ENCODE measurements at regions of chr12 and their contacts with region 1.

Region 1: GRCh38 chr12:92136965-92137721 is 8.5 kb downstream of the BTG1 start:
- DNase-seq: no peak
- ATAC-seq: peak; percentile 7
- H3K4me3 ChIP-seq: peak overlapping the region; percentile 89
- H3K27ac ChIP-seq: peak overlapping the region; percentile 85
- H3K4me1 ChIP-seq: peaks cover 13% of the 10 kb centered on the region; the same call in 1 of the 2 replicates
- H3K27me3 ChIP-seq: no peaks in the 10 kb centered on the region
- CTCF ChIP-seq: no peak
- EP300 ChIP-seq: no peak
- POLR2A ChIP-seq: no peak
- RAD21 ChIP-seq: no peak

Region 2: DNA sequence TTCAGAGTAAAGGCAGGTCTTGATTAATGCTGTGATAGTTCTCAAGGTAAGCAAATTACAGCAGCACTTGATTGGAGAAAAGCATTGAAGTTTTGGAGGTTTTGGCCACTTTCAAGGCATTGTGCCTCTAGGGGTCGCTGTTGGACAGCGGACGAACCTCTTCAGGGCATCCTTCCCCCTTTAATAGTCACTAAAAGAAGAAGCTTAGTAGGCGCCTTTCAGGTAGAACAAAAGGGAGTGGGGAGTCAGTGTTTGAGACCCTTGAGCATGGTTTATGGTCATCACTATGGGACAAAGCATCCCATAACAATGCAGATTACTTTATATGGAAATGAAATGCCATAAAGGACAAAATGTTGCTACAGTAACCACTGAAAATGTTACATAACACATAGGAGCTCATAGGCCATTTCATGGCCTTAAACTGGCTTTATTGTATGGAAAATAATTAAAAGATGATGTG is 755.0 kb before region 1 on chr12:
- CTCF ChIA-PET with region 1: interaction called, 10 read pairs
- POLR2A ChIA-PET with region 1: no interaction called
- RAD21 ChIA-PET with region 1: interaction called, 7 read pairs
- SMC1A ChIA-PET with region 1: interaction called, 4 read pairs
- in situ Hi-C with region 1: no loop called
- intact Hi-C with region 1: loop called (anchors 5 kb)
- DNase-seq: peak; percentile 54
- ATAC-seq: peak; percentile 95
- H3K4me3 ChIP-seq: peak overlapping the region; percentile 68
- H3K27ac ChIP-seq: peak overlapping the region; percentile 37; the same call in 1 of the 2 replicates
- H3K4me1 ChIP-seq: peaks cover 3% of the 10 kb centered on the region; the same call in 1 of the 2 replicates
- H3K27me3 ChIP-seq: no peaks in the 10 kb centered on the region
- CTCF ChIP-seq: peak; percentile 80 to 89 (median 87)
- EP300 ChIP-seq: no peak
- POLR2A ChIP-seq: no peak
- RAD21 ChIP-seq: peak; percentile 92

Region 3: DNA sequence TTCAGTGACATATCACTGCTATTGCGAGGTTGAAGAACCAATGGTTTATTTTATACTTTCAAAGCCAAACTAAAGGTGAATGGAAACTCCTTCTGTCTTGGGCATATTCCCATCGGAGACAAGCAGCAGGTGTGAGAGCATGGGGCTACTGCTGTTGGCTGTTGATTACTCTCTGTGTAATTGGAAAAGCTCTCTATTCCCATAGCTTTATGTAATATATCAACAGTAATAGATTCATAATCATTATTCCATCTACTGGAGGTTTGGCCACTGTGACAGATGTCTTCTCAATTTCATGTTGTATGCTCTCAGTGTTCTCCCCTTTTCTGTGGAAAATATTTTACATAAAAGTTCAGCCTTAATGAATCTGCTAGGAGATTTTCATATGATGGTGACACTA is 343.5 kb before region 1 on chr12:
- CTCF ChIA-PET with region 1: no interaction called
- POLR2A ChIA-PET with region 1: no interaction called
- RAD21 ChIA-PET with region 1: no interaction called
- SMC1A ChIA-PET with region 1: no interaction called
- in situ Hi-C with region 1: no loop called
- intact Hi-C with region 1: no loop called
- DNase-seq: no peak
- ATAC-seq: no peak
- H3K4me3 ChIP-seq: no peak overlapping the region
- H3K27ac ChIP-seq: no peak overlapping the region
- H3K4me1 ChIP-seq: no peaks in the 10 kb centered on the region
- H3K27me3 ChIP-seq: no peaks in the 10 kb centered on the region
- CTCF ChIP-seq: no peak
- EP300 ChIP-seq: no peak
- POLR2A ChIP-seq: no peak
- RAD21 ChIP-seq: no peak

Region 4: DNA sequence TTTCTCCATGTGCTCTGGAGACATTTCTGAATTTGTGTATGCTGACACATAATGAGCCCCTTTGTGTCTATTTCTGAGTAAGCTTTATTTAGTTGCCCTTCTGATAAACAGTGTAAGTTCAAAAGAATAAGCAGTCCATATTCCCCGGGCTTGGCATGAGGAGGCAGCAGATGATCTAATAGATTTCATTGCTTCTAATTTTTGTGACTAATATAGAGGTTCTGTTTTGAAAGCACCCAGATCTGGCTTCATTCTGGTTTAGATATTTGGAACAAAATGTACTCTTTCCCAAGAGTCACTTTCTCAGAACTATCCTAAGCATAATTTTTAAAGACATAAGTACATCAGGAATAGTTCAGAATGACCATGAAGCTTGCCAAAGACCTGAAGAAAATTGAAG is 282.4 kb before region 1 on chr12:
- CTCF ChIA-PET with region 1: no interaction called
- POLR2A ChIA-PET with region 1: no interaction called
- RAD21 ChIA-PET with region 1: no interaction called
- SMC1A ChIA-PET with region 1: no interaction called
- in situ Hi-C with region 1: no loop called
- intact Hi-C with region 1: no loop called
- DNase-seq: no peak
- ATAC-seq: peak; percentile 57
- H3K4me3 ChIP-seq: no peak overlapping the region
- H3K27ac ChIP-seq: no peak overlapping the region
- H3K4me1 ChIP-seq: no peaks in the 10 kb centered on the region
- H3K27me3 ChIP-seq: no peaks in the 10 kb centered on the region
- CTCF ChIP-seq: no peak; a peak in 1 of 6 replicates
- EP300 ChIP-seq: no peak
- POLR2A ChIP-seq: no peak
- RAD21 ChIP-seq: no peak; the same call in 1 of the 2 replicates

Region 5: DNA sequence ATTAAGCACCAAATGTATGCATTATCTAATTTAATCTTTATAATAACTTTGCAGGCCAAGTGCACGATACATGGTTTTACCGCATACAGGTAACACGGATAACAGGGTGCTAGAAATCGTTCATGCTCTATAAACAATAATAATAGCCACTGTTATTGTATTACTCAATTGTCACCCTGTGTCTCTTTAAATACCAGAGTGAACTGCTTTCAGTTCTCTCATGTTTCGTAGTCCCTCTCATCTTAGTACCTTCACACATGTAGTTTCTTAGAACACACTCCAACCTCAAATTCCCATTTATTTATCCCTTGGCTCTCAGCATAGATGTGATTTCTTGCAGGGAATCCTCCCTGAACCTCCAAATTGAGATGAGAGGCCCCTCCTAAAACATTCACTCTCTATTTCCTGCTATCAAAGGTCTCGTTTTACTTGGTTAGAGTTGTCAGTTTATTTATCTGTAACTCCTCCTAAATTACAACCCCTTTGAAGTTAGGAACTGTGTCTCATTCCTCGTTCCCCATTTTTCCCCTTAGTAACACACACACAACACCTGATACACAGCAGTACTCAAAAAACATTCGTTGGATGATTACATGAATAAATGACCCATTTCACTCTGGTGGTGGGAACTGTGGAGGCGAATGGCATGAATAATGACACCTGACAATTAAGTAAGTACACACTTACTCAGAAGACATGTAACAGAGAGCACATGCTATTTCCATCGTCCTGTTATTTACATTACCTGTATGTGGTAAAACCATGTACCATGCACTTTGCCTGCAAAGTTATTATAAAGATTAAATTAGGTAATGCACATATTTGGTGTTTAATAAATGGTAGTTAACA is 126.1 kb before region 1 on chr12:
- CTCF ChIA-PET with region 1: interaction called, 3 read pairs
- POLR2A ChIA-PET with region 1: no interaction called
- RAD21 ChIA-PET with region 1: interaction called, 12 read pairs
- SMC1A ChIA-PET with region 1: interaction called, 9 read pairs
- in situ Hi-C with region 1: no loop called
- intact Hi-C with region 1: no loop called
- DNase-seq: no peak
- ATAC-seq: peak; percentile 79
- H3K4me3 ChIP-seq: no peak overlapping the region
- H3K27ac ChIP-seq: no peak overlapping the region
- H3K4me1 ChIP-seq: peaks cover 3% of the 10 kb centered on the region; the same call in 1 of the 2 replicates
- H3K27me3 ChIP-seq: no peaks in the 10 kb centered on the region
- CTCF ChIP-seq: no peak
- EP300 ChIP-seq: no peak
- POLR2A ChIP-seq: no peak
- RAD21 ChIP-seq: no peak

Region 6: DNA sequence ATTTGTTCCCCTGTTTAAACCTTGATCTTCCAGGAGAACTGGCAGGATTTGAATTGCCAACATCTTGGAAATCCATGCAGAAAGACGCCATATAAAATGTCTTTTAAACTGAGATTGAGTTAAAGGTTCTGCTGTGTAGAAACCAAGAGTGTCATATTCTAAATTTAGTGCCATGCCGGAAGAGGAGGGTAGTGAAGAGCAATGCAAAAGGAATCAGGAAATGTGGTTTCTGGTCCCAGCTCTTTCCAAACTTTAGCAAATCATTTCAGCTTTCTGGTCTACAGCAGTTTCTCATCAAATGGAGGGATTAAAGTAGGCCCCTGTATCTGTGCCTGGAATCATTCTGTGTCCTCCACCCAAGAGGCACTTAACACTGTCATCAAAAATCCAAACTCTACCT is 77.2 kb before region 1 on chr12:
- CTCF ChIA-PET with region 1: no interaction called
- POLR2A ChIA-PET with region 1: interaction called, 10 read pairs
- RAD21 ChIA-PET with region 1: interaction called, 27 read pairs
- SMC1A ChIA-PET with region 1: interaction called, 52 read pairs
- in situ Hi-C with region 1: no loop called
- intact Hi-C with region 1: loop called (anchors 1 kb)
- DNase-seq: no peak
- ATAC-seq: 0 out of 3 replicates have a peak, but pooled peaks have one; percentile 12
- H3K4me3 ChIP-seq: no peak overlapping the region
- H3K27ac ChIP-seq: no peak overlapping the region
- H3K4me1 ChIP-seq: peaks cover 25% of the 10 kb centered on the region
- H3K27me3 ChIP-seq: no peaks in the 10 kb centered on the region
- CTCF ChIP-seq: no peak
- EP300 ChIP-seq: no peak
- POLR2A ChIP-seq: no peak
- RAD21 ChIP-seq: no peak

Region 7: DNA sequence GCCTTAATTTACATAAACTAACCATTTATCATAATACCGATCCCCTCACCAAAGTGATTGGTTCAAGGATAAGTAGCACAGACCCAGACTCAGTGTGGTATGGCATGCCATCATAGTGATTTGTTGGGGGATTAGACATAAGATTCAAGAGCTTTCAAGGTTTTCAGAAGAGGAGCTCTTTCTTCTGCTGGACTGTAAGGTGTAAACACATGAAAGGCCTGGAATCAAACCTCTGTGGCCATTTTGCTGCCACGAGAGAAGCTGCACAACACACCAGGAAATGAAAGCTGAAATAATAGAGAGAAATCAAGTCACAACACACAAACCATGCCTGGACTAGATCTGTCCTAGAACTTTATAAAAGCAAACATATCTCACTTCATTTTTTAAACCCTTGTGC is 22.3 kb before region 1 on chr12:
- CTCF ChIA-PET with region 1: interaction called, 5 read pairs
- POLR2A ChIA-PET with region 1: no interaction called
- RAD21 ChIA-PET with region 1: interaction called, 6 read pairs
- SMC1A ChIA-PET with region 1: interaction called, 11 read pairs
- in situ Hi-C with region 1: no loop called
- intact Hi-C with region 1: no loop called
- DNase-seq: no peak
- ATAC-seq: no peak
- H3K4me3 ChIP-seq: no peak overlapping the region
- H3K27ac ChIP-seq: no peak overlapping the region
- H3K4me1 ChIP-seq: peaks cover 3% of the 10 kb centered on the region
- H3K27me3 ChIP-seq: no peaks in the 10 kb centered on the region
- CTCF ChIP-seq: no peak
- EP300 ChIP-seq: no peak
- POLR2A ChIP-seq: no peak
- RAD21 ChIP-seq: no peak

Region 8: DNA sequence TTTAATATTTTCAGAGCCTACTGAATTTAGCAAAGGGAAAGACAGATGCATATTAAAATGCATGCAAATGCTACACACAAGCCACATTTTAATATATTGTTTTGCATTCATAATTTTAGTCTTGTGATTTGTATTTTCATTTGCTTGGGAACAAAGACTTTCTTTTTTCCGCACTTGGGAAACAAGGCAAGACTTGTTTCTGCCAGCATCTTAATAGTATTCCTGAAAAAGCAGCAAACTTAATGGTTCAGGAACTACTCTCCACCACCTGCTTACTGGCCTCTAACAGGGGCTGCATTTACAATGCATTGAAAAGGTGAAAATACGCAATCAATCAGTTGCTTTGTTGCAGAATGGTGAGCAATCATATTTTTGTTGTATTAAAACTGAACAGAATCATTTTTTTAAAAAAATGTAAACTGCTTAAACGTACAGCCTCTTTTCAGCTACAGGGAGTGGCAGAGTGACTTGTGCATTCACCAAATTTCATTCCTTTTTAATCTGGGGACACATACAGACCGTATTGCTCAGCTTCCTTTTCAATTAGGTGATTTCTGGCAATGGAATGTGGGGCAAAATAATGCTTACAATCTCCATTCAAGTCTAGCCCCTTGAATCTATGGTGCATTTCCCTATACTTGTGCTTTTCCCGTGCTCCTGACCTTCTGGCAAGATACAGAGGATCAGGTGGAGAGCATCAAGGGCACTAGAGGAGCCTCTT is 152.6 kb after region 1 on chr12:
- CTCF ChIA-PET with region 1: no interaction called
- POLR2A ChIA-PET with region 1: no interaction called
- RAD21 ChIA-PET with region 1: no interaction called
- SMC1A ChIA-PET with region 1: no interaction called
- in situ Hi-C with region 1: no loop called
- intact Hi-C with region 1: no loop called
- DNase-seq: no peak
- ATAC-seq: no peak
- H3K4me3 ChIP-seq: no peak overlapping the region
- H3K27ac ChIP-seq: no peak overlapping the region
- H3K4me1 ChIP-seq: no peaks in the 10 kb centered on the region
- H3K27me3 ChIP-seq: no peaks in the 10 kb centered on the region
- CTCF ChIP-seq: no peak
- EP300 ChIP-seq: no peak
- POLR2A ChIP-seq: no peak
- RAD21 ChIP-seq: no peak

Region 9: DNA sequence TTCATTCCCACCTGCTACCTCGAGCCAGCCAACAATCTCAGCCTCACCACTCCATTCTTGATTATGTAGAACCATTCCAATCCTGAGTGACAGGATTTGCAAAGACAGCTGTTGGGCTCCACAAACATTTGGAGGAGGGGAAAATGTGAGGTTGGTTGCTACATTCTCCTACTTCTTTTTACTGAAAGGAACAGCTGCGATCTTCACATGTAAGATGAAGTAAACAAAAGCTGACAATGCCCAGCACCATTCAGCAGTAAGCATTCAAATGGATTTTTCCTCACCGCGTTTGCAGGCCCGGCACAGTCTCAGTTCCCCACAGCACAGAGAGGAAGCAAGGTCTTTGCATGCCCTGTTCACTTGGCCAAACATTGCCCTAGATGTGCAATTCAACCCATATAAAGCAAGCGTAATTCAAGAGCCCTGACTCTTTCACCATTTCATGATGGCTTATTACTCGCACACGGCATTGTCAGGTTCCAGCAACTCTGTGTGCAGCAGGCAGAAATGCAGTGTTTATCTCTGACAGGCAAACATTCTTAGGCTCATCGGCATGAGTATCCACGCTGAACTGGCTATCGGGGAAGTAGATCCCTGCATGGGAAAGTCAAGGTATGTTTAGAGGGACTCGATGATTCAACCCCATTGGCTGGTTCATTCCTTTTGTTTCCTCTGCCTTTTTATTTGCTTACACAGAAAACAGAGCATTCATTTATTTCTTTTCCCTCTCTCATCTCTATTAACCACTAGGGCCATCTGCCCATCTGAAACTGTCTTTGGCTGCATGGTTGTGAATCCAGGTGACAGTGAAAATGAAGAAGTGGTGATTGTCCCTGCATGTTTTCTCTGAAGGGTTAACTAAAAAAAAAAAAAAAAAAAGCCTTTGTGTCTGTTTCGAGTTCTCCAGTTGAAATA is 329.5 kb after region 1 on chr12:
- CTCF ChIA-PET with region 1: interaction called, 3 read pairs
- POLR2A ChIA-PET with region 1: interaction called, 10 read pairs
- RAD21 ChIA-PET with region 1: interaction called, 8 read pairs
- SMC1A ChIA-PET with region 1: interaction called, 8 read pairs
- in situ Hi-C with region 1: no loop called
- intact Hi-C with region 1: no loop called
- DNase-seq: peak; percentile 90
- ATAC-seq: peak; percentile 39
- H3K4me3 ChIP-seq: peak overlapping the region; percentile 82
- H3K27ac ChIP-seq: peak overlapping the region; percentile 99
- H3K4me1 ChIP-seq: peaks cover 62% of the 10 kb centered on the region
- H3K27me3 ChIP-seq: no peaks in the 10 kb centered on the region
- CTCF ChIP-seq: no peak
- EP300 ChIP-seq: peak; percentile 65 to 70; a peak in 3 of 4 replicates
- POLR2A ChIP-seq: peak; percentile 85
- RAD21 ChIP-seq: peak; percentile 5